Activated CD4-positive, alpha-beta T cell treated with anti-CD3 and anti-CD28 coated beads for 36 hours (primary cell): ENCODE measurements at regions of chr7 and their contacts with region 1.

Region 1: DNA sequence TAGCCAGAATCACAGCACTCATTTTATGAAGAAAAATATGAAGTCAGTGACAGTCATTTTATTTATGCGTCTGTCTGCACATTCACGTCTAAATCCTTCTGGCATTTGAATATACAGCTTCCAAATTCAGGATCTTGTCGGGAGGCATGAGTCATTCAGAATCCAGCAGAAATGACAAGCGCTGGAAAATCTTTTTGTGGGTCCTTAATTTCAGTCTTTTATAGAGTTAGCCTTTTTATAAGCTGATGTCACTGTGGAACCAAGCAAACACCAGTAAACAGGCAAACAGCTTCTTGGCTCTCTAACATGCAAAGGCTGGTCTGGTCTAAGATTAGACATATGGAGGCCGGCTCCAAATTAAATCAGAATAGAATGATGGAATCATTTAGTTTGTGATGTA is 388.2 kb upstream of the TEX47 start:
- DNase-seq: no peak
- ATAC-seq: no peak
- H3K4me3 Mint-ChIP-seq: no peak overlapping the region
- H3K27ac Mint-ChIP-seq: no peak overlapping the region
- H3K4me1 Mint-ChIP-seq: no peaks in the 10 kb centered on the region
- H3K27me3 Mint-ChIP-seq: no peaks in the 10 kb centered on the region

Region 2: DNA sequence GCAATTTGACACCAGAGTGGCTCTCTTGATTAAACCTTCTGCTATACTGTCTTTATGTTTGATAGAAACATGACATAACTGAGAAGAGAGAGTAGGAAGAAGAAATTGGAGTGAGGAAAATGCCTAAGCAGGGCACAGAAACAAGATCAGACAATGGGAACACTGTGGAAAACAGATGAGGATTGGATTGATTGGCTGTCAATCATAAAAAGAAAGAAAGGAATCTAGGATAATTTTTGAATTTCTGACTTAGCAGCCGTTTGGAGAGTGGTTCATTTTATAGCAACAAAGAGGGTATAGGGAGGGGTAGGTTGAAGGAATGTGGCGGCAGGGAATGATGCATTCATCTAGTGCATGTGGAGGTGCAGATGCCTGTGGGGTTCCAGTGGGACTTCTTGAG is 395.9 kb before region 1 on chr7:
- CTCF ChIA-PET with region 1: no interaction called
- POLR2A ChIA-PET with region 1: no interaction called
- intact Hi-C with region 1: no loop called
- DNase-seq: no peak
- ATAC-seq: no peak
- H3K4me3 Mint-ChIP-seq: no peak overlapping the region
- H3K27ac Mint-ChIP-seq: no peak overlapping the region
- H3K4me1 Mint-ChIP-seq: no peaks in the 10 kb centered on the region
- H3K27me3 Mint-ChIP-seq: no peaks in the 10 kb centered on the region

Region 3: GRCh38 chr7:88826222-88826621 is 357.5 kb before region 1 on chr7:
- CTCF ChIA-PET with region 1: no interaction called
- POLR2A ChIA-PET with region 1: no interaction called
- intact Hi-C with region 1: no loop called
- DNase-seq: no peak
- ATAC-seq: no peak
- H3K4me3 Mint-ChIP-seq: no peak overlapping the region
- H3K27ac Mint-ChIP-seq: no peak overlapping the region
- H3K4me1 Mint-ChIP-seq: no peaks in the 10 kb centered on the region
- H3K27me3 Mint-ChIP-seq: no peaks in the 10 kb centered on the region

Region 4: DNA sequence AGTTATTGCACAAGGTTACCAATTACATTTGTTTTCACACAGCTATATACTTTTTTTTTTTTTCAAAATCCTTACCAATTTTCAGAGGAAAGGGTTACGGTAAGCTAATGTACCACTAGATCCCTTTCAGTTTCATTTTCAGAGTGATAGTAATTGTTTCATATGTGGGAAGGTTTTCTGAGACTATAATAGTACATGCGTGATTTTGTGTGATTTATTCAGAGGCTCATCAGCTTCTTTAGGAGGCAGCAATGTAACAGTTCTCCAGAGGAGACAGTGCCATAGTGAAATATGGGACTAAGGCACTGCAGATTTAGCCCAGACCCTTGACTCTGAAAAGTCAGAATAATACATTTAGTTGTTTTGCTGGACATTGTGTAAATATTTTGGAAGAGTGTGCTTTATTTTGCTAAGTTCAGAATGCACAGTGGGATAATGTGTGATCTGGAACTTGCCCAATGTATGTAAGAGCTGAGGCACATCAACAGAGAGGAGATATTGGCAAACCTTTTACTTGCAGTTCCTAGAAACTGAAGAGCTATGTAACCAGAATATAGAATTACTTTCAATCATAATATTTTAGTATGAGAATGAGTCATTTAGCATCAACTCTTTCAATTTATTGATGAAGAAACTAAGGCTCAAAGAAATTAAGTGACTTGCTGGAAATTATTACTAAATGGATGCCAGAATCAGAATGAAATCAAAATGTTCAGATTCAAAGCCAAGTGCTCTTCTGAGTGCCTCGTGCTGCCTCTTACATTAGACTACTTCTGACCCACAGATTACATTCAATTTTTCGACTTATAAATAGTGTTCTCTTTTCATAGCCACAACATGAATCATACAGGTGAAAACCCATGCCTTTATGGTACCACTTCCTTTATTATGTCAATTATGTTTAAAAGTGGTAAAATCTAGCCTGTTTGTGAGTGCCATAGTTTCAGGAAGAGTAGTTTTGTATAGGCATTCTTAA is 180.4 kb before region 1 on chr7:
- CTCF ChIA-PET with region 1: no interaction called
- POLR2A ChIA-PET with region 1: no interaction called
- intact Hi-C with region 1: no loop called
- DNase-seq: no peak
- ATAC-seq: peak; percentile 87
- H3K4me3 Mint-ChIP-seq: peak overlapping the region; percentile 48
- H3K27ac Mint-ChIP-seq: peak overlapping the region; percentile 83
- H3K4me1 Mint-ChIP-seq: peaks cover 26% of the 10 kb centered on the region
- H3K27me3 Mint-ChIP-seq: peaks cover 5% of the 10 kb centered on the region

Region 5: GRCh38 chr7:89133819-89134218 is 49.9 kb before region 1 on chr7:
- CTCF ChIA-PET with region 1: no interaction called
- POLR2A ChIA-PET with region 1: no interaction called
- intact Hi-C with region 1: loop called in 1 of 2 experiments (anchors 5 kb)
- DNase-seq: no peak
- ATAC-seq: no peak
- H3K4me3 Mint-ChIP-seq: no peak overlapping the region
- H3K27ac Mint-ChIP-seq: no peak overlapping the region
- H3K4me1 Mint-ChIP-seq: no peaks in the 10 kb centered on the region
- H3K27me3 Mint-ChIP-seq: no peaks in the 10 kb centered on the region

Region 6: DNA sequence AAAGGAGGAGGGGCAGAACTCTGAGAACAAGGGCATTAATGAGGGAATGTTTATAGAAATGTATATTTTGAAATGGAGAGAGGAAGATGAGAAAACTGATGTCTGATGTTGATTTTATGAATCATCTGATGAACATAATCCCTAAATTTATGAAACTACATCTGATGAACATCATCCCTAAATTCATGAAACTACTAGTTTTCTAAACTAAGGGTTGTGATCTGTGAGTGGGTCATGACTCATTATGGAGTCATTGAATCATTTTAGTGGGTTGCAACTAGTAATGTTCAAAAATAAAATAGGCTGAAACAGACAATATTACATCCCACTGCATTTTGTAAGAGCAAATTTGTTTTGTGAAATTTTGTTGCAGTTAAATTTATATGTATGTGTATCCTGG is 54.4 kb after region 1 on chr7:
- CTCF ChIA-PET with region 1: no interaction called
- POLR2A ChIA-PET with region 1: no interaction called
- intact Hi-C with region 1: no loop called
- DNase-seq: no peak
- ATAC-seq: peak; percentile 53
- H3K4me3 Mint-ChIP-seq: no peak overlapping the region
- H3K27ac Mint-ChIP-seq: no peak overlapping the region
- H3K4me1 Mint-ChIP-seq: peaks cover 10% of the 10 kb centered on the region
- H3K27me3 Mint-ChIP-seq: no peaks in the 10 kb centered on the region